Posterior cingulate gyrus (tissue), 11 donors: ENCODE measurements at regions of chr2 and their contacts with region 1.

Region 1: DNA sequence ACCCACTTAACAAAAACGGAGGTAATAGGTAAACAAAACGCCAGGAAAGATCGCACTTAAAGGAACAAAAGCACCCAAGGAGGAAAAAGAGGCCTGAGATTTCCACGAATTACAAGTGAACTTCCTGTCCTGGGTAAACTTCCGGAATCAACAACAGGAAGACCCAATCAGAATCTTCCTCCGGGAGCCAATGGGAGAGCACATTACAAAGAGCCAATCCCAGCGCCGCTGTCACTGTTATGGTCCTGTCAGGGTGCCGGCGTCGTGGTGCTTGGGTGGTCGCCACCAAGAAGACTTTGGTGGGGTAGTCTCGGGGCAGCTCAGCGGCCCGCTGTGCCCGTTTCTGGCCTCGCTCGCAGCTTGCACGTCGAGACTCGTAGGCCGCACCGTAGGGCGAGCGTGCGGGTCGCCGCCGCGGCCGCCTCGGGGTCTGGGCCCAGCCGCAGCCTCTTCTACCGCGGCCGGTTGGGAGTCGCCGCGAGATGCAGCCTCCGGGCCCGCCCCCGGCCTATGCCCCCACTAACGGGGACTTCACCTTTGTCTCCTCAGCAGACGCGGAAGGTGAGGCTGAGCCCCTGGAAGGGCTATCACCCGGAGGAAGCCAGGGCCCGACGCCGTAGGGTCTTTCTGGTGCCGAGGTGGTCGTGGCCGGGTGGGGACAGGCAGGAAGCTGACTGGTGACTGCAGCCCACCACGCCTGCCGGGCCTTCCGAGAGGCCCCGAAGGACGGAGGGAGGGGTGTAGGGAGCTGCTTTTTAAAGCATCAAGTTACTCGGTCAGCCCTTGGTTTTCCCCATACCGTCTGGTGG is at the start of gene YIPF4:
- DNase-seq: peak; percentile 76 to 97 (median 84)

Region 2: DNA sequence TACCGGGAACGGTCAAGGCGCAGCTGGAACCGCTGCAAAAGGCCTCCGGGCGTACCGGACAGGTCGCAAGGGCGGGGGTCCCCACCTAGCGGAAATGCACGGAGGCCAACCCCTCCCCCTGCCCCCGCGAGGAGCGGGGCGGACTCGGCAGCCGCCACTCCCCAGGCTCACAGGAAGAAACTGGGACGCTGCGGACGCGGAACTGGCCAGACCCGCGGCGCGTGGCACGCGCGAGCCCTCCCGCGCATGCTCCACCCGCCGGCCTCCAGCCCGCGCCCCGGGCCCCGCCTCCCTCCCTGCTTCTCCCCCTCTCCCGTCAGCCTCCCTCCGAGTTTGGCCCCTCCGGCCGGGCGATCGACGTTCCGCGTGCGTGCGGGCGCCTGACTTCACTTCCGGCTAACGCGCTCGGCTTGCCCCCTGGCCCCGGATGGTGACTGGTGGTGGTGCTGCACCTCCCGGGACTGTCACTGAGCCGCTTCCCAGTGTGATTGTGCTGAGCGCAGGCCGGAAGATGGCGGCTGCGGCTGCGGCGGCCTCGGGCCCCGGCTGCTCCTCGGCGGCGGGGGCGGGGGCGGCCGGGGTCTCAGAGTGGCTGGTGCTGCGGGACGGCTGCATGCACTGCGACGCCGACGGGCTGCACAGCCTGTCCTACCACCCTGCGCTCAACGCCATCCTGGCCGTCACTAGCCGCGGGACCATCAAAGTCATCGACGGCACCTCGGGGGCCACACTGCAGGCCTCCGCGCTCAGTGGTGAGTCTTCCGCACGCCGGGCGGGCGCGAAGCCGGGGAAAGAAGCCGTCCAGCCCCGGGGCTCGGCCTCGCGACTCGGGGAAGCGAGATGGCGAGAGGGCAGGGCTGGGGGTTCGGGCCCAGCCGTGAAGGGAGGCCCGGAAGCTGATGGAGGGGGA is 79.1 kb after region 1 on chr2 and contains the start of gene BIRC6:
- intact Hi-C with region 1: loop called (anchors 5 kb)
- DNase-seq: peak; percentile 99 to 100 (median 99)